ENCODE measurements at regions of chr1 and their contacts with region 1.

Region 1: GRCh38 chr1:188594542-188595235 is 1765.9 kb downstream of the PLA2G4A start:
- DNase-seq: no peak
- ATAC-seq: no peak
- H3K4me3 ChIP-seq: no peak overlapping the region
- H3K27ac ChIP-seq: no peak overlapping the region
- H3K4me1 ChIP-seq: peaks cover 7% of the 10 kb centered on the region
- H3K27me3 ChIP-seq: no peaks in the 10 kb centered on the region
- CTCF ChIP-seq: peak; percentile 49

Region 2: DNA sequence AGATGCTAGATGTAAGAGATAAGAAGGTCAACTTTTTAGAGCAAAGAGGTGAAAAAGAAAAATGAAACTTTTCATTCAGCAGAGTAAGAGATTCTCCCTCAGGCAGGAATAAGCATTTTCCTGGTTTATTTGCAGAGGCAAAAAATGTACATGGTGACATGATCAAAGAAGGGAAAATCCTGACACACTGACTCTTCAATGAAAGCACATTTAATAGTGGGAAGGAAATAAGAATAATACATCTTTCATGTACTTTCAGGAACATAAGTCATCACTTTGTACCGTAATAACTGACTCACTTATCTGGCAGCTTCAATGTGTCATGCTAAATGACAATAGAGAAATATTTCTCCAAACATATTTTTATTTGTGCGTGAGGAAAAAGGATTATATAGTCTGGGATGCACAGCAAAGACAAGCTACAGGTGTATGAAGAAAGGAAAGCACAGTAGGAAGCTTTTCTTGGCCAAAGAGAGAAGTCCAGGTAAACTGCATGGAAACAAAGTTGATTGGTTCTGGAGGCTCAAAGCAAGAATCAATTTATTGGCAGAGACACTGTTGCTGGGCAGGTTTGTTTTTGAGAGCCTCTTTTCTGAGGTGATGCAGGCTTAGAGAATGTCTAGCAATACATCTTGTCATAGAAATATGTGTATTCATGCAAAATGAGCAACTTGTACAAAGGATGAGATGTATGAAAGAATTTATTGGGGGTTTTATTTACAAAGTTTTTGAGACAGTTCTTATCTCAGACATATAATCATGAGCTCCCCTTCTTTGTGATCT is 356.9 kb before region 1 on chr1:
- CTCF ChIA-PET with region 1: no interaction called
- POLR2A ChIA-PET with region 1: no interaction called
- intact Hi-C with region 1: no loop called
- DNase-seq: peak; percentile 77
- ATAC-seq: peak; percentile 94
- H3K4me3 ChIP-seq: no peak overlapping the region
- H3K27ac ChIP-seq: peak overlapping the region; percentile 46
- H3K4me1 ChIP-seq: peaks cover 6% of the 10 kb centered on the region; the same call in 1 of the 2 replicates
- H3K27me3 ChIP-seq: no peaks in the 10 kb centered on the region
- CTCF ChIP-seq: no peak

Region 3: DNA sequence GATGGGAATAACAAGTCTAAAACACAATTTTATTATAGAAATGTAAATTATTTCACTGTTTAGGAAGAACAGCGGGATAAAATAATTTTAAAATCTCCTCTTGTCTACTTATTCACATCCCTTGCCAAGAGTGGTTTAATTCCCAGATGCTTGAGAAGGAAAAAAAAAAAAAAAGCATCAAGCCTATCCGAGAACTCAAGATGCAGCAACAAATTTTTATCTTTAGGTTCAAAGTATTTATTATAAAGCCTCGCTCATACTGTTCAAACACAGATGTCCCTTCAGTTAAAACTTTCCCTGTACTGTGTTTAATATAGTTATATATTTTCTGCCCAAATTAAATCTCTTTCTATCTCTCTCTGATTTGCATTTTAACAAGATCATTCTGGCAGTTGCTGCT is 150.2 kb before region 1 on chr1:
- CTCF ChIA-PET with region 1: no interaction called
- POLR2A ChIA-PET with region 1: no interaction called
- intact Hi-C with region 1: no loop called
- DNase-seq: no peak
- ATAC-seq: no peak
- H3K4me3 ChIP-seq: no peak overlapping the region
- H3K27ac ChIP-seq: no peak overlapping the region
- H3K4me1 ChIP-seq: no peaks in the 10 kb centered on the region
- H3K27me3 ChIP-seq: no peaks in the 10 kb centered on the region
- CTCF ChIP-seq: no peak

Region 4: GRCh38 chr1:188463913-188464312 is 130.8 kb before region 1 on chr1:
- CTCF ChIA-PET with region 1: no interaction called
- POLR2A ChIA-PET with region 1: no interaction called
- intact Hi-C with region 1: loop called (anchors 10 kb)
- DNase-seq: peak; percentile 37
- ATAC-seq: peak; percentile 27; the same call in 1 of the 2 replicates
- H3K4me3 ChIP-seq: no peak overlapping the region
- H3K27ac ChIP-seq: no peak overlapping the region
- H3K4me1 ChIP-seq: no peaks in the 10 kb centered on the region
- H3K27me3 ChIP-seq: no peaks in the 10 kb centered on the region
- CTCF ChIP-seq: peak; percentile 33; the same call in 1 of the 2 replicates

Region 5: GRCh38 chr1:188489713-188490112 is 105.0 kb before region 1 on chr1:
- CTCF ChIA-PET with region 1: no interaction called
- POLR2A ChIA-PET with region 1: no interaction called
- intact Hi-C with region 1: loop called (anchors 5 kb)
- DNase-seq: peak; percentile 46
- ATAC-seq: peak; percentile 74
- H3K4me3 ChIP-seq: no peak overlapping the region
- H3K27ac ChIP-seq: peak overlapping the region; percentile 56
- H3K4me1 ChIP-seq: peaks cover 24% of the 10 kb centered on the region
- H3K27me3 ChIP-seq: no peaks in the 10 kb centered on the region
- CTCF ChIP-seq: no peak; the same call in 1 of the 2 replicates

Region 6: DNA sequence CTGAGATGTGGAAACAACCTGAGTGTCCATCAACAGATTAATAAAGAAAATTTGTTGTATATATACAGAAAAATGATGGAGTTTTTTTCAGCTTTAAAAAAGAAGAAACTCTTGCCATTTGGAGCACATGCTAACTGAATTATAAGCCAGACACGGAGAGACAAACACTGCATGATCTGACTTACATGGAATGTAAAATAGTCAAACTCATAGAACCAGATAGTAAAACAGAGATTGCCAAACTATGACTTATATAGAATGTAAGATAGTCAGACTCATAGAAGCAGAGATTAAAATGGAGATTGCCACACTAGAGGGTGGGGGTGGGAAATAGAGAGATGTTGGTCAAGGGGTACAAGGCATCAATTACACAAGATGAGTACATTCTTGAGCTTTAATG is 20.6 kb after region 1 on chr1:
- CTCF ChIA-PET with region 1: no interaction called
- POLR2A ChIA-PET with region 1: no interaction called
- intact Hi-C with region 1: no loop called
- DNase-seq: no peak
- ATAC-seq: no peak
- H3K4me3 ChIP-seq: no peak overlapping the region
- H3K27ac ChIP-seq: no peak overlapping the region
- H3K4me1 ChIP-seq: no peaks in the 10 kb centered on the region
- H3K27me3 ChIP-seq: no peaks in the 10 kb centered on the region
- CTCF ChIP-seq: no peak

Region 7: DNA sequence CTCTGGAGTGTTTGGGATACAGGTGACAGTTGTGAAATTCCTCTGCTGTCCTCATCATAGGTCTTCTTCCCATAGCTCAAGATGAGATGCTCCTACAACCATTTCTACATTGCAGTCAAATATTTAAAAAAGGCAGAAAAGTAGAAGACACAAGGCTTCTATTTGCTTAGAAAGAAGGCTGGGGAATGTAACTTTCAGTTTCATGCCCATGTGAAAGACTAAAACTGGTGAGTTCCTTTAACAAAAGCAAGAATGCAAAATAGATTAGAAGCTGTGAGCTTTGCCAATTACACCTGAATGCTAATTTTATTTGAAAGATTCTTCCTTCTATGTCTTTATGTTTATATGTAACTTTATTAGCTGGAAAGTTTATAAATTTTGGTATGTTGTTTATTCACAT is 200.3 kb after region 1 on chr1:
- CTCF ChIA-PET with region 1: no interaction called
- POLR2A ChIA-PET with region 1: no interaction called
- intact Hi-C with region 1: no loop called
- DNase-seq: no peak
- ATAC-seq: no peak
- H3K4me3 ChIP-seq: no peak overlapping the region
- H3K27ac ChIP-seq: no peak overlapping the region
- H3K4me1 ChIP-seq: no peaks in the 10 kb centered on the region
- H3K27me3 ChIP-seq: no peaks in the 10 kb centered on the region
- CTCF ChIP-seq: no peak